ENCODE measurements at regions of chr5 and their contacts with region 1.

Region 1: GRCh38 chr5:77775790-77776553 is at the start of gene TBCA:
- DNase-seq: peak; percentile 43 to 92
- H3K4me3 ChIP-seq: peak within 1 kb of the TSS; percentile 81 to 88
- H3K27ac ChIP-seq: peak within 1 kb of the TSS; percentile 96 to 98
- H3K4me1 ChIP-seq: peaks cover 4 to 30% of the 10 kb centered on the region in 2 donors
- H3K27me3 ChIP-seq: no peaks in the 10 kb centered on the region
- CTCF ChIP-seq: peak; percentile 30 to 37 (median 33)
- total RNA-seq, gene TBCA: 27.4 TPM

Region 2: DNA sequence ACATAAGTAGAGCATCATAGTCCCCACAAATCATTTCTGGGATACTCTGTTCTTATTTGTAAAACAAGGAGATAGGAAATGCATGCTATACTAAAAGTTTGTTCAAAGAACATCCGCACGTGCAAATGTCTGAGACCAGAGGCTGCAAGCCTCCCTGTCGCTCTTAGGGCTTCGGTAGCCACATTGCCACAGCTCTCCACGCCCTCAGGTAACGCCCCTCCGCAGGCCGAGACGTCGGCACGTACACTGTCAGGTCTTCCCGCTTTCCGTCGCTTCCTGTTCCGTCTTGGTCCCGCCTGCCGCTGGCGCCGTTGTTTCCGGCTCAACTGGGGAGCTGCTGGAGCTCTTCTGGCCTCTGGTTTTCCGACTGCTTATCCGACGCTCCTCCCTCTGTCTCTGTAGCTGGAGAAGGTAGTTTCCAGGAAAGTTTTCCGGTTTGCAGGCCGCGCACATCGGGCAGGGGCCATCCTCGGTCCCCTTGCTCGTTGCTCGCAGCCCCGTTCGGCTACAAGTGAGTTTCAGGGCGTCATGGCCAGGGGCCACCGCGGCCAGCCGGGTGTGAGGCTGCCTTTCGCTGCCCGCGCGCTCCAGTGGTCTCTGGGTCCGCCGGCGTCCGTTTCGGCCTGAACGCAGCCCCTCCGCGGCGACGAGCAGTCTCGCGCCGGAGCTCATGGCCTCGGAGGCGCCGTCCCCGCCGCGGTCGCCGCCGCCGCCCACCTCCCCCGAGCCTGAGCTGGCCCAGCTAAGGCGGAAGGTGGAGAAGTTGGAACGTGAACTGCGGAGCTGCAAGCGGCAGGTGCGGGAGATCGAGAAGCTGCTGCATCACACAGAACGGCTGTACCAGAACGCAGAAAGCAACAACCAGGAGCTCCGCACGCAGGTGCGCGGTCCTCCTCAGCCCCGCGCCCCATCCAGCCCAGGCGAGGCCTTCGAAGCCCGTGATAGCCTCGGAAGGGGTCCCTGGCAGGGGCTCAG is 745.6 kb before region 1 on chr5 and contains the start of gene AGGF1:
- intact Hi-C with region 1: loop called (anchors 10 kb)
- DNase-seq: peak; percentile 71 to 96
- H3K4me3 ChIP-seq: peak within 1 kb of the TSS; percentile 71 to 91
- H3K27ac ChIP-seq: peak within 1 kb of the TSS; percentile 82 to 96
- H3K4me1 ChIP-seq: peaks cover 0 to 11% of the 10 kb centered on the region in 2 donors
- H3K27me3 ChIP-seq: no peaks in the 10 kb centered on the region
- CTCF ChIP-seq: no peak
- total RNA-seq, gene AGGF1: 60.3 TPM

Region 3: GRCh38 chr5:77645158-77645994 is 130.6 kb before region 1 on chr5:
- intact Hi-C with region 1: loop called (anchors 5 kb)
- DNase-seq: no peak
- H3K4me3 ChIP-seq: peak overlapping the region; percentile 30 to 43
- H3K27ac ChIP-seq: no peak overlapping the region
- H3K4me1 ChIP-seq: peaks cover 0 to 10% of the 10 kb centered on the region in 2 donors
- H3K27me3 ChIP-seq: peaks cover 34% of the 10 kb centered on the region
- CTCF ChIP-seq: peak in 2 of 3 experiments; percentile 24 to 41

Region 4: GRCh38 chr5:77658662-77659061 is 117.3 kb before region 1 on chr5:
- intact Hi-C with region 1: no loop called
- DNase-seq: no peak
- H3K4me3 ChIP-seq: no peak overlapping the region
- H3K27ac ChIP-seq: no peak overlapping the region
- H3K4me1 ChIP-seq: no peaks in the 10 kb centered on the region
- H3K27me3 ChIP-seq: no peaks in the 10 kb centered on the region
- CTCF ChIP-seq: no peak

Region 5: DNA sequence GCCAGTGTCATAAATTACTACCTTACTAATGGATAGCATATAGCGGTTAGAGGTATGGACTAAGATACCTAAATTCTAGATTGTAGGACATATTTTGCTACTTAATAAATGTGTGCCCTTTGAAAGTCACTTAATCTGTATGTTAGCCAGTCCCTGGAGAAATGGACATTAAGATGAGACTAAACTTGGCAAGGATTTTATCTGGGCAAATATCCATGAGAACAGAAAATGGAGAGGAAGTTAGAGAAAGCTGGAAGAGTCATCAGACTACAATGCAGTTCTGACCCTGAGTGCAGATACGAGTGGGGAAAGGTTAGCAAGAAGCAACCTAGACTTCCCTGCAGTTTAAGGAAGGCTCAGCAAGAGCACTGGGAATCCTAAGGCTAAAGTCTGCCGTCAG is 32.8 kb before region 1 on chr5:
- intact Hi-C with region 1: no loop called
- DNase-seq: no peak
- H3K4me3 ChIP-seq: no peak overlapping the region
- H3K27ac ChIP-seq: no peak overlapping the region
- H3K4me1 ChIP-seq: no peaks in the 10 kb centered on the region
- H3K27me3 ChIP-seq: no peaks in the 10 kb centered on the region
- CTCF ChIP-seq: no peak

Region 6: GRCh38 chr5:77791356-77791755 is 15.4 kb after region 1 on chr5:
- intact Hi-C with region 1: no loop called
- DNase-seq: no peak
- H3K4me3 ChIP-seq: no peak overlapping the region
- H3K27ac ChIP-seq: no peak overlapping the region
- H3K4me1 ChIP-seq: no peaks in the 10 kb centered on the region
- H3K27me3 ChIP-seq: no peaks in the 10 kb centered on the region
- CTCF ChIP-seq: no peak

Region 7: GRCh38 chr5:77828445-77828844 is 52.5 kb after region 1 on chr5:
- intact Hi-C with region 1: no loop called
- DNase-seq: no peak
- H3K4me3 ChIP-seq: no peak overlapping the region
- H3K27ac ChIP-seq: no peak overlapping the region
- H3K4me1 ChIP-seq: no peaks in the 10 kb centered on the region
- H3K27me3 ChIP-seq: no peaks in the 10 kb centered on the region
- CTCF ChIP-seq: no peak

Region 8: GRCh38 chr5:77852514-77853352 is 76.8 kb after region 1 on chr5:
- intact Hi-C with region 1: loop called (anchors 5 kb)
- DNase-seq: no peak
- H3K4me3 ChIP-seq: peak overlapping the region; percentile 66 to 83
- H3K27ac ChIP-seq: no peak overlapping the region
- H3K4me1 ChIP-seq: peaks cover 0 to 3% of the 10 kb centered on the region in 2 donors
- H3K27me3 ChIP-seq: no peaks in the 10 kb centered on the region
- CTCF ChIP-seq: no peak

Region 9: DNA sequence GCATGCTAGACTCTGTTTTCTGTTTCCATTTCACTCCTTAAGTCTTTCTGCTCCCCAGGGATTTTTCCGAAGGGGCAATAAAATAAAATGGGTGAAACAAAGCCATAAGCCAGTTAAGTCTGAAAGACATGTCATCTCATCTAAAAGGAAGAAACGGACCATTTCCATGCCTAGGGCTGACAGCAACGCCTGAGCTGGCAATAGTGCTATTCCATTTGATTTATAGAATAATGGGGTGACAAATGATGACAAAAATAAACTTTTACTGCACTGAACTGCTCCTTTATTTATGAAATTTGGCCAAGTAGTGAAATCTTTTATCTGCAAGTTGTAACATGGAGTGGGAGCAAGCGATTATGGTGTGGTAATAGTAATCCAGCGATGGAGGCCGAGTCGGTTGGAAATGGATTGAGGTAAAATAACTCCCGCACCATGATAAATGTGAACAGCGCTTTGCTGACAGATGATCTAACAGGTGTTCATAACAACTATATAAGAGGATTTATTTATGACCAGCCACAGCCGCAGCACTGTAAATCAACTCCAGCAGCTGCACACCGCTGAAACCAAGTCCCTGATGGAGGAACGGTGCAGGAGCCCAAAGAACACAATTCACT is 219.9 kb after region 1 on chr5:
- intact Hi-C with region 1: loop called (anchors 5 kb)
- DNase-seq: no peak
- H3K4me3 ChIP-seq: no peak overlapping the region
- H3K27ac ChIP-seq: peak overlapping the region in 1 of 2 donors; percentile 68
- H3K4me1 ChIP-seq: peaks cover 4 to 23% of the 10 kb centered on the region in 2 donors
- H3K27me3 ChIP-seq: no peaks in the 10 kb centered on the region
- CTCF ChIP-seq: no peak

Measured in ascending aorta (tissue), 2 donors.